Prostate gland (tissue), 2 donors: ENCODE measurements at regions of chr15 and their contacts with region 1.

Region 1: DNA sequence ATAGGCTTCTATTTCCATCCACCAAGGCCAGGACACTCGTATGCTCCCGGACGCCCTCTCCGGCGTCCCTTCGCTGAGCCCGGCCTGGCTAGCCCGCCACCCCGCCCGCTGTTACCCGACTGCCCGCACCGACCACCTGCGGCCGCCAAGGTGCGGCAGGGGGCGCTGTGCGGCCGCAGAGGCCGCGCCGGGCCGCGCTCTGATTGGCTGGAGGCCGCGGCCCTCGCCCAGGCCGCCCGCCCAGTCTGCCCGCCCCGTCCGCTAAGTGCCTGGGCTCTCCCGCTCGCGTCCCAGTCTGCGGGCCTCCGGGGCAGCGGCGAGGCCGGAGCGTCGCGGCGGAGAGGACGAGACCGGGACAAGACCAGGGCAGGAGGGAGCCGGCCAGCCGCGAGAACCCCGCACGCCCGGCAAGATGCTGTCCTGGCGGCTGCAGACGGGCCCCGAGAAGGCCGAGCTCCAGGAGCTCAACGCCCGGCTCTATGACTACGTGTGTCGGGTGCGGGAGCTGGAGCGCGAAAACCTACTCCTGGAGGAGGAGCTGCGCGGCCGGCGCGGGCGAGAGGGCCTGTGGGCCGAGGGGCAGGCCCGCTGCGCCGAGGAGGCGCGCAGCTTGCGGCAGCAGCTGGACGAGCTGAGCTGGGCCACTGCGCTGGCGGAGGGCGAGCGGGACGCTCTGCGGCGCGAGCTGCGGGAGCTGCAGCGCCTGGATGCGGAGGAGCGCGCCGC is at the start of gene SYNM:
- DNase-seq: peak; percentile 63
- H3K4me3 ChIP-seq: peak within 1 kb of the TSS; percentile 50 to 51
- H3K27ac ChIP-seq: peak within 1 kb of the TSS; percentile 77 to 83
- H3K4me1 ChIP-seq: no peaks in the 10 kb centered on the region
- H3K27me3 ChIP-seq: no peaks in the 10 kb centered on the region
- CTCF ChIP-seq: peak; percentile 72 to 94 (median 88)
- POLR2A ChIP-seq: peak; percentile 50
- total RNA-seq, gene SYNM: 181 to 185 TPM

Region 2: GRCh38 chr15:99169769-99170311 is 64.9 kb after region 1 on chr15:
- intact Hi-C with region 1: loop called (anchors 5 kb)
- DNase-seq: peak; percentile 39
- H3K4me3 ChIP-seq: no peak overlapping the region
- H3K27ac ChIP-seq: peak overlapping the region; percentile 76 to 81
- H3K4me1 ChIP-seq: no peaks in the 10 kb centered on the region
- H3K27me3 ChIP-seq: no peaks in the 10 kb centered on the region
- CTCF ChIP-seq: no peak
- POLR2A ChIP-seq: no peak

Region 3: DNA sequence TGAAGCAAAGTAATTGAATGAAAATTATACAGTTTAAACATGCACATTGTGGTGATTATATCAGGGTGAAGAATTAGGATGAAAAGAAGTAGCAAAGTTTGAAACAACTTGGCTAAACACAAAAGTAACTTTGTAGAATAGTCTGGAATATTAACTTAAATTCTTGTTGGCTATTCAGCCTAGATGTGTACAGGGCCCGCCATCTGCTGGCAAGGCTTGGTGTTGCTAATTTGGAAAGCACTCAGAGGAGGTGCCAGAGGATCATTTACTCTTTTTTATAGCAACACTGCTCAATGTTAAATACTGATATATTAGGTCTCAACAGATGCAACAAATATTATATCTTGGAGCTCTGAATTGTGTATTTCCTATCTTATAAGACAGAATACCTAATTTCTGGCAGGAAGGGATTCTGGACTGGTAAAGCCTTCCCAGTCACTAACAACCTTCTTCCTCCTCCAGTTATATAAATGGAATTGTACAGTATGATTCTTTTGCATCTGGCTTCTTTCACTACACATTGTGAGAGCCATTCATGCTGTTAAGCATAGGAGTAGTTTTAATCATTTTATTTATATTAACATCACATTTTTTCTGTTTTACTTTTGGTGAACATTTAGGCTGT is 108.3 kb after region 1 on chr15:
- intact Hi-C with region 1: loop called (anchors 1 kb)
- DNase-seq: peak; percentile 73
- H3K4me3 ChIP-seq: no peak overlapping the region
- H3K27ac ChIP-seq: peak overlapping the region; percentile 37 to 44
- H3K4me1 ChIP-seq: no peaks in the 10 kb centered on the region
- H3K27me3 ChIP-seq: no peaks in the 10 kb centered on the region
- CTCF ChIP-seq: peak; percentile 31 to 94 (median 85)
- POLR2A ChIP-seq: no peak

Region 4: DNA sequence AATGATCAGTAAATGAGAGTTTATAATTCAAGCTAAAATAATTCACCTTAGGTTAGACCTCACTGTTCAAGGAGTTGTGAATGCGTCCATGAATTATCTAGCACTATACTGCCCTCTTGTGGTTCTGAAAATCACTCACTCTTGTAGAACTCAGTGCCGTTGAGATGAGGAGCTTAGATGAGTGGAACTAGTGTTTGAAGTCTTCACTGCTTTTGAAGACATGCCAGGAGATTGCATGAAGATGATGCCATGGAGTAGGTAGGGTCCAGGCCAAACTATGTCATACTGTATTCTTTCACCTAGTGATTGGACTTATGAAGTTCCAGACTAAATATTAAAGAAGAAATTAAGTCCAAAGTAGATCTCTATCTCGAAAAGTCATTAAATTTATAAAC is 599.5 kb after region 1 on chr15:
- intact Hi-C with region 1: loop called (anchors 10 kb)
- DNase-seq: peak; percentile 76
- H3K4me3 ChIP-seq: no peak overlapping the region
- H3K27ac ChIP-seq: peak overlapping the region in 1 of 2 donors; percentile 36
- H3K4me1 ChIP-seq: no peaks in the 10 kb centered on the region
- H3K27me3 ChIP-seq: no peaks in the 10 kb centered on the region
- CTCF ChIP-seq: peak; percentile 36 to 88 (median 84)
- POLR2A ChIP-seq: no peak